Natural killer cell (primary cell): ENCODE measurements at regions of chrX and their contacts with region 1.

Region 1: GRCh38 chrX:40108959-40109287 is 11.2 kb upstream of the BCOR start:
- DNase-seq: peak in 1 of 2 donors; percentile 82
- ATAC-seq: peak; percentile 33 to 48 (median 45)
- H3K4me3 ChIP-seq: no peak overlapping the region
- H3K4me3 Mint-ChIP-seq: no peak overlapping the region
- H3K27ac ChIP-seq: no peak overlapping the region
- H3K27ac Mint-ChIP-seq: no peak overlapping the region
- H3K4me1 ChIP-seq: peaks cover 36% of the 10 kb centered on the region
- H3K4me1 Mint-ChIP-seq: peaks cover 0 to 7% of the 10 kb centered on the region in 2 donors
- H3K27me3 ChIP-seq: peaks cover 4% of the 10 kb centered on the region
- H3K27me3 Mint-ChIP-seq: peaks cover 6 to 25% of the 10 kb centered on the region in 2 donors
- CTCF ChIP-seq: no peak

Region 2: GRCh38 chrX:40013266-40014195 is 95.4 kb before region 1 on chrX:
- intact Hi-C with region 1: loop called (anchors 5 kb)
- DNase-seq: peak; percentile 23 to 58
- ATAC-seq: peak; percentile 25 to 45 (median 28)
- H3K4me3 ChIP-seq: peak overlapping the region; percentile 61
- H3K4me3 Mint-ChIP-seq: peak overlapping the region; percentile 84
- H3K27ac ChIP-seq: peak overlapping the region; percentile 76
- H3K27ac Mint-ChIP-seq: peak overlapping the region in 1 of 2 donors; percentile 81
- H3K4me1 ChIP-seq: peaks cover 49% of the 10 kb centered on the region
- H3K4me1 Mint-ChIP-seq: peaks cover 0 to 20% of the 10 kb centered on the region in 2 donors
- H3K27me3 ChIP-seq: peaks cover 3% of the 10 kb centered on the region
- H3K27me3 Mint-ChIP-seq: peaks cover 10 to 22% of the 10 kb centered on the region in 2 donors
- CTCF ChIP-seq: no peak

Region 3: DNA sequence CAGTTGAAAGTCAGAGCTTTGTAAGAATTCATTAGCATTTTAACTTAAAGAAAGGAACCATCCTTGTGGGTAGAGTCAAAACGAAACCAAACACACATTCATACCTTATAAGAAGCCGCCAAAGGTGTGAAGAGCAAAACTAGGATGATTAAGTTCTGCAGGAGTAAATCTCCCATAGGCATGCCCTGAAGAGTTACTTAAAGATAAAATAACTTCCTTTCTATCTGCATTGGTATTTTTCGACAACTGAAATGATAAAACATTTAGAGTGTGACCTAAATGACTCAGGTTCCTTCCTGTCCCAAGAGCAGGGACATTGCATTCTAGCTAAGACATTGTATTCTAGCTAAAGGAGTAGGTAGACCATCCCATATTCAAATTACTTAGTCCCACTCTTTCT is 86.5 kb before region 1 on chrX:
- intact Hi-C with region 1: loop called (anchors 5 kb)
- DNase-seq: no peak
- ATAC-seq: peak in 1 of 3 donors; percentile 37
- H3K4me3 ChIP-seq: no peak overlapping the region
- H3K4me3 Mint-ChIP-seq: no peak overlapping the region
- H3K27ac ChIP-seq: no peak overlapping the region
- H3K27ac Mint-ChIP-seq: no peak overlapping the region
- H3K4me1 ChIP-seq: peaks cover 8% of the 10 kb centered on the region
- H3K4me1 Mint-ChIP-seq: peaks cover 10 to 15% of the 10 kb centered on the region in 2 donors
- H3K27me3 ChIP-seq: no peaks in the 10 kb centered on the region
- H3K27me3 Mint-ChIP-seq: peaks cover 0 to 6% of the 10 kb centered on the region in 2 donors
- CTCF ChIP-seq: no peak

Region 4: DNA sequence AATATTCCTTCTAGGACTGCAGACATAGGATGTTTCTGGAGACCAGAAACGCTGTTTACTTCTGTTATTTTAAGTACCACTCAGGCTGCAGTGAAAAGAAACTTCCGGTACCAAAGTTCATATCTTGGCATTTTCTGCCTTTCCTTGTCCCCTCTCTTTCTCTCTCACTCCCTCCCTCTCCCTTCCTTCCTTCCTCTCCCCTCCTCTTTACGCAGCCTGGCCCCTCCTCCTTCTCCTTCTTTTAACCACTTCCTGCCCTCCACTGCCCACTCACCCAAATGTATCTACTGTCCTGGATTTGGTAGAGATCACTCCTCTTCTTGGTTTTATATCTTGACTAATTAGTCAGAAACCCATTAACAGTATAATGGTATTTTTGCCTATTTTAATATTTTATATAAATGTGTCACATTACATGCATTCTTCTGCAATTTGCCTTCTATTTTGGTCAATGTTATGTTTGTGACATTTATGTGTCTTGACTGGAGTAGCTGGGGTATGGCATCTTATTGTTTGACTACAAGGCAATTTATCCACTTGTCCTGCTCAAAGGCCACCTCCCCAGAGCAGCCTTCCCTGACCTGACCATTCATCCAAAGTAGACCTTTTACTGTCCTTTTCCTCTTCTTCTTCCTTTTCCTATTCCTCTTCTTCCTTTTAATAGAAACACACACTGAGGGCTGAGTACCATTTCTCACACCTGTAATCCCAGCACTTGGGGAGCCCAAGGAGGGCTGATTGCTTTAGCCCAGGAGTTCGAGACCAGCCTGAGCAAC is 68.0 kb before region 1 on chrX:
- intact Hi-C with region 1: no loop called
- DNase-seq: no peak
- ATAC-seq: no peak
- H3K4me3 ChIP-seq: no peak overlapping the region
- H3K4me3 Mint-ChIP-seq: no peak overlapping the region
- H3K27ac ChIP-seq: no peak overlapping the region
- H3K27ac Mint-ChIP-seq: no peak overlapping the region
- H3K4me1 ChIP-seq: peaks cover 30% of the 10 kb centered on the region
- H3K4me1 Mint-ChIP-seq: peaks cover 0 to 13% of the 10 kb centered on the region in 2 donors
- H3K27me3 ChIP-seq: no peaks in the 10 kb centered on the region
- H3K27me3 Mint-ChIP-seq: no peaks in the 10 kb centered on the region
- CTCF ChIP-seq: no peak

Region 5: DNA sequence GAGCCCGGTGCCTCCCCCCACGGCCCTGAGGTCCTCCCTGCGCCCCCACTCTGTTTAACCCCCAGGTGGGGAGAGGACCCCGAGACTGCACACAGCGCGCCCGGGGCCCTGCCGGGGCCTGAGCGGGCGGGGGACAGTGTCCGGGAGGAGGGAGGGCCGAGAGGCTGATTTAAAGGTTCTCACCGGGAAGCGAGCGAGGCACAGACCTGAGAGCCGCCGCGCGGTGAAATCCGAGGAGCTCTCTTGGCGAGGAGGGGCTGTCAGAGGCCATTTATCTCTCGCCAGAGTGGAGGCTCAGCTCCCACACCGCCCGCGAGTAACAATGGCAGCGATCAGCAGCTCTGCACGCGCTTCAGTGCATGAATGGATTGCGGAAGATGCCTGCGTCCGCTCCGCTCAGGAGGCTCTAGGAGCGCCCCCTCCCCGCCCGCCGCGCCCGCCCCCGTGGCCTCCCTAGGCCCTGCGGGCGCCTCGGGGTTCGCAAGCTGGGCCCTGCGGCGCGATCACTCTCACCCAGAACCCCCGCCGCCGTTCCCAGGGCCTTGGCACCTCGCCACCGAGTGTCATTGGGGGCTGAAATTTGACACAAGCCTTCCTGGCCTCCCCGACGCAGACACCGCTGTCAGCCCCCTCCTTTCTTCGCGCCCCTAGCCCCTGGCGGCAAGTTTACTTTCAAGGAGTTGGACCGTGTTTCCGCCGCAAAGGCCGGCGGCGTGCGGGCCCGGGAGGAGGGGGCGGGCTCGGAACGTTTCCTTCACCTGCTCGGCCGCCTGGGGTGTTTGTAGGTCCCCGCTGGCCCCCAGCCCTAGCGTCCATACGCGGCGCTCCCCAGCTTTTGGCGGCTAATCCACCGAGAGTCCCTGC is 37.6 kb after region 1 on chrX:
- intact Hi-C with region 1: loop called (anchors 5 kb)
- DNase-seq: peak in 1 of 2 donors; percentile 66
- ATAC-seq: peak; percentile 64 to 73 (median 65)
- H3K4me3 ChIP-seq: peak overlapping the region; percentile 24
- H3K4me3 Mint-ChIP-seq: peak overlapping the region; percentile 49
- H3K27ac ChIP-seq: no peak overlapping the region
- H3K27ac Mint-ChIP-seq: no peak overlapping the region
- H3K4me1 ChIP-seq: peaks cover 48% of the 10 kb centered on the region
- H3K4me1 Mint-ChIP-seq: peaks cover 17 to 29% of the 10 kb centered on the region in 2 donors
- H3K27me3 ChIP-seq: peaks cover 21% of the 10 kb centered on the region
- H3K27me3 Mint-ChIP-seq: peaks cover 10 to 47% of the 10 kb centered on the region in 2 donors
- CTCF ChIP-seq: no peak

Region 6: GRCh38 chrX:40169193-40170101 is 60.5 kb after region 1 on chrX:
- intact Hi-C with region 1: loop called (anchors 2 kb)
- DNase-seq: peak; percentile 60 to 89
- ATAC-seq: peak; percentile 67 to 82 (median 70)
- H3K4me3 ChIP-seq: peak overlapping the region; percentile 20
- H3K4me3 Mint-ChIP-seq: peak overlapping the region; percentile 78
- H3K27ac ChIP-seq: peak overlapping the region; percentile 92
- H3K27ac Mint-ChIP-seq: peak overlapping the region; percentile 63 to 93
- H3K4me1 ChIP-seq: peaks cover 79% of the 10 kb centered on the region
- H3K4me1 Mint-ChIP-seq: peaks cover 35 to 48% of the 10 kb centered on the region in 2 donors
- H3K27me3 ChIP-seq: no peaks in the 10 kb centered on the region
- H3K27me3 Mint-ChIP-seq: peaks cover 21 to 33% of the 10 kb centered on the region in 2 donors
- CTCF ChIP-seq: peak; percentile 15